ENCODE measurements at regions of chr6 and their contacts with region 1.

Region 1: GRCh38 chr6:97732045-97732444 is 449.0 kb upstream of the MMS22L start:
- DNase-seq: no peak
- ATAC-seq: no peak
- H3K4me3 ChIP-seq: no peak overlapping the region
- H3K27ac ChIP-seq: no peak overlapping the region
- H3K4me1 ChIP-seq: no peaks in the 10 kb centered on the region
- H3K27me3 ChIP-seq: no peaks in the 10 kb centered on the region

Region 2: GRCh38 chr6:97535800-97536199 is 196.2 kb before region 1 on chr6:
- intact Hi-C with region 1: loop called in 1 of 2 experiments (anchors 5 kb)
- DNase-seq: no peak
- ATAC-seq: no peak
- H3K4me3 ChIP-seq: no peak overlapping the region
- H3K27ac ChIP-seq: no peak overlapping the region
- H3K4me1 ChIP-seq: no peaks in the 10 kb centered on the region
- H3K27me3 ChIP-seq: no peaks in the 10 kb centered on the region

Region 3: DNA sequence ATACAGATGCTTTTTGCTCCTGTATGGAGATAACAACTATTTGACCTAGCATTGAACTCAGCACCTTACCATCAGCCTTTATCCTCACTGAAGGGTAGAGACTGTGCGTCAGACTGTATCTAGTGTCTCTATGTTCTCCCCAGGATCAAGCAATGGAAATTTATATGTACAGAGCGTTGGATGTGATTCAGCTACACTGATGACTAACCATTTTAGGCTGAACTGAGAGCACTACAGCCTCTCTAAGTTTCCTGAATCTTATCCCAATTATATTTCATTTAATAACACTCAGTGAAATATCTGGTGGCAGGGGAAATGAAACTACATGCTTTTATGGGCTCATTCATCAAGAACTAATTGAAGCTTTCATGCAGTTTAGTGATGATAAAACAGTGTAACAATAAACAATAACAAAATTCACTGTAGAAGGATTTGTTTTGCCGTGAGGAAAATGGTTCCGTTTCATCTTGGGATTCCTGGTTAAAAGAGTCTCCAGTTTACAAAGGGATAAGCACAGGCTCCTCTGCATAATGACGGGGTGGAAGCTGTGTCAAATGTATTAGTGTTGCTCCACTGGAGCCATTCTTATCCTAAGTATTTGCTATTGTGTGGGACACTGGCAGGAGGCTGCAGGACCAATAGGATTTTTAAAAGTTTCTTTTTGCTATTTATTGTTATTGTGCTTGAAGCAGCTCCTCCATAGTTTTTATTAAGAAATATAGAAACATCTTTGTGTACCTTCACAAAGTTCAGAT is 118.6 kb after region 1 on chr6:
- intact Hi-C with region 1: no loop called
- DNase-seq: no peak
- ATAC-seq: no peak
- H3K4me3 ChIP-seq: no peak overlapping the region
- H3K27ac ChIP-seq: no peak overlapping the region
- H3K4me1 ChIP-seq: no peaks in the 10 kb centered on the region
- H3K27me3 ChIP-seq: no peaks in the 10 kb centered on the region